ENCODE measurements at regions of chr1 and their contacts with region 1.

Region 1: GRCh38 chr1:223748773-223749733 is 36.7 kb downstream of the CAPN2 start:
- DNase-seq: peak in 1 of 2 experiments; percentile 76
- H3K4me3 ChIP-seq: peak overlapping the region; percentile 43 to 77 (median 70)
- H3K27ac ChIP-seq: no peak overlapping the region
- H3K4me1 ChIP-seq: peaks cover 0 to 16% (median 9%) of the 10 kb centered on the region in 4 experiments; a peak in 6 of 7 replicates
- H3K27me3 ChIP-seq: peaks cover 3 to 21% (median 17%) of the 10 kb centered on the region in 4 experiments
- CTCF ChIP-seq: peak; percentile 70 to 85 (median 74)
- EP300 ChIP-seq: no peak
- POLR2A ChIP-seq: no peak
- RAD21 ChIP-seq: peak; percentile 64 to 78

Region 2: GRCh38 chr1:223695941-223696340 is 53.1 kb before region 1 on chr1:
- CTCF ChIA-PET with region 1: interaction called, 67 read pairs
- POLR2A ChIA-PET with region 1: interaction called, 5 read pairs
- DNase-seq: no peak
- H3K4me3 ChIP-seq: no peak overlapping the region
- H3K27ac ChIP-seq: no peak overlapping the region
- H3K4me1 ChIP-seq: peaks cover 0 to 2% (median 0%) of the 10 kb centered on the region in 4 experiments; a peak in 1 of 7 replicates
- H3K27me3 ChIP-seq: no peaks in the 10 kb centered on the region
- CTCF ChIP-seq: no peak
- EP300 ChIP-seq: no peak
- POLR2A ChIP-seq: no peak
- RAD21 ChIP-seq: no peak

Region 3: GRCh38 chr1:223712194-223712849 is 36.7 kb before region 1 on chr1 and contains the start of gene CAPN2:
- CTCF ChIA-PET with region 1: interaction called, 74 read pairs
- POLR2A ChIA-PET with region 1: interaction called, 10 read pairs
- DNase-seq: peak in 1 of 2 experiments; percentile 83
- H3K4me3 ChIP-seq: peak within 1 kb of the TSS; percentile 58 to 76 (median 62)
- H3K27ac ChIP-seq: no peak within 1 kb of the TSS; the same call in 1 of the 2 replicates
- H3K4me1 ChIP-seq: peaks cover 3 to 10% (median 7%) of the 10 kb centered on the region in 4 experiments
- H3K27me3 ChIP-seq: peaks cover 0 to 50% (median 38%) of the 10 kb centered on the region in 4 experiments; a peak in 6 of 7 replicates
- CTCF ChIP-seq: peak; percentile 67 to 85 (median 68)
- EP300 ChIP-seq: no peak
- POLR2A ChIP-seq: peak in 1 of 2 experiments; percentile 30; a peak in 1 of 3 replicates
- RAD21 ChIP-seq: peak; percentile 68 to 88
- total RNA-seq, gene CAPN2: 9.2 and 9.4 TPM in 2 replicates

Region 4: GRCh38 chr1:223726380-223727001 is 22.6 kb before region 1 on chr1:
- CTCF ChIA-PET with region 1: interaction called, 74 read pairs
- POLR2A ChIA-PET with region 1: interaction called, 4 read pairs
- DNase-seq: peak in 1 of 2 experiments; percentile 64
- H3K4me3 ChIP-seq: no peak overlapping the region
- H3K27ac ChIP-seq: 0 out of 2 replicates have a peak overlapping the region, but pooled peaks have one; percentile 25
- H3K4me1 ChIP-seq: peaks cover 9 to 25% (median 16%) of the 10 kb centered on the region in 4 experiments
- H3K27me3 ChIP-seq: peaks cover 7 to 50% (median 41%) of the 10 kb centered on the region in 4 experiments
- CTCF ChIP-seq: no peak
- EP300 ChIP-seq: no peak
- POLR2A ChIP-seq: no peak
- RAD21 ChIP-seq: no peak

Region 5: DNA sequence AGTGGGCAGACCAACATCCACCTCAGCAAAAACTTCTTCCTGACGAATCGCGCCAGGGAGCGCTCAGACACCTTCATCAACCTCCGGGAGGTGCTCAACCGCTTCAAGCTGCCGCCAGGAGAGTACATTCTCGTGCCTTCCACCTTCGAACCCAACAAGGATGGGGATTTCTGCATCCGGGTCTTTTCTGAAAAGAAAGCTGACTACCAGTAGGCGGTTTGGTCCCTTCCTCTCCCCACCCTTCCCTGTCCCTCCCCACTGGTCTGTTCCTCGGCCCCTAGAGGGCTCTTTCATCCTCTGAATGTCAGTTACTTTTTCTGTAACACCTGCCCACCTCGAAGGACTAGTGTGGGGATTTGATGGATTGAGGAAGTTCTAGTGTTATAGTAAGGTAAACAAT is 10.2 kb after region 1 on chr1:
- CTCF ChIA-PET with region 1: interaction called, 24 read pairs
- POLR2A ChIA-PET with region 1: no interaction called
- DNase-seq: peak; percentile 53 to 67
- H3K4me3 ChIP-seq: no peak overlapping the region
- H3K27ac ChIP-seq: no peak overlapping the region
- H3K4me1 ChIP-seq: no peaks in the 10 kb centered on the region
- H3K27me3 ChIP-seq: no peaks in the 10 kb centered on the region
- CTCF ChIP-seq: peak; percentile 18 to 28 (median 26); a peak in 3 of 4 replicates
- EP300 ChIP-seq: no peak
- POLR2A ChIP-seq: no peak
- RAD21 ChIP-seq: peak; percentile 44 to 57

Region 6: GRCh38 chr1:223771814-223772770 is 23.0 kb after region 1 on chr1:
- CTCF ChIA-PET with region 1: interaction called, 13 read pairs
- POLR2A ChIA-PET with region 1: no interaction called
- DNase-seq: peak in 1 of 2 experiments; percentile 45
- H3K4me3 ChIP-seq: no peak overlapping the region
- H3K27ac ChIP-seq: no peak overlapping the region
- H3K4me1 ChIP-seq: peaks cover 0 to 5% (median 2%) of the 10 kb centered on the region in 4 experiments; a peak in 2 of 7 replicates
- H3K27me3 ChIP-seq: no peaks in the 10 kb centered on the region
- CTCF ChIP-seq: no peak
- EP300 ChIP-seq: no peak
- POLR2A ChIP-seq: no peak
- RAD21 ChIP-seq: no peak

Region 7: DNA sequence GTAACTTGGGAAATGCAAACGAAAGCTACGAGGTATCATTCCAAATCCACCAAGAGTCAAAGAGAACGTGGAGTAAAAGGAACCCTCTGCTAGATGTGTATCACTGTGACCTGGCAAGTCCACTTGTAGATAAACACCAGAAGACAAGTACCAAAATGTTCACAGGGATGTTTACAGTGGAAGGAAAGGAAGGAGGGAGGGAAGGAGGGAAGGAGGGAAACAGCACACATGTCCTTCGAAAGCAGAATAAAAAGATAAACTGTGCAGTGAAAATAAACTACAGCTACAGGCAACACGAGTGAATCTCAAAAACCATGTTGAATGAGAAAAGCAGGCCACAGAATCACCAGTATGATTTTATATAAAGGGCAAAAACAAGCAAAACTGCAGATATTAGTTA is 36.8 kb after region 1 on chr1:
- CTCF ChIA-PET with region 1: no interaction called
- POLR2A ChIA-PET with region 1: no interaction called
- DNase-seq: no peak
- H3K4me3 ChIP-seq: no peak overlapping the region
- H3K27ac ChIP-seq: no peak overlapping the region
- H3K4me1 ChIP-seq: no peaks in the 10 kb centered on the region
- H3K27me3 ChIP-seq: no peaks in the 10 kb centered on the region
- CTCF ChIP-seq: no peak
- EP300 ChIP-seq: no peak
- POLR2A ChIP-seq: no peak
- RAD21 ChIP-seq: no peak

Measured in H1 (cell line).